SK-N-SH (cell line): ENCODE measurements at regions of chr11 and their contacts with region 1.

Region 1: DNA sequence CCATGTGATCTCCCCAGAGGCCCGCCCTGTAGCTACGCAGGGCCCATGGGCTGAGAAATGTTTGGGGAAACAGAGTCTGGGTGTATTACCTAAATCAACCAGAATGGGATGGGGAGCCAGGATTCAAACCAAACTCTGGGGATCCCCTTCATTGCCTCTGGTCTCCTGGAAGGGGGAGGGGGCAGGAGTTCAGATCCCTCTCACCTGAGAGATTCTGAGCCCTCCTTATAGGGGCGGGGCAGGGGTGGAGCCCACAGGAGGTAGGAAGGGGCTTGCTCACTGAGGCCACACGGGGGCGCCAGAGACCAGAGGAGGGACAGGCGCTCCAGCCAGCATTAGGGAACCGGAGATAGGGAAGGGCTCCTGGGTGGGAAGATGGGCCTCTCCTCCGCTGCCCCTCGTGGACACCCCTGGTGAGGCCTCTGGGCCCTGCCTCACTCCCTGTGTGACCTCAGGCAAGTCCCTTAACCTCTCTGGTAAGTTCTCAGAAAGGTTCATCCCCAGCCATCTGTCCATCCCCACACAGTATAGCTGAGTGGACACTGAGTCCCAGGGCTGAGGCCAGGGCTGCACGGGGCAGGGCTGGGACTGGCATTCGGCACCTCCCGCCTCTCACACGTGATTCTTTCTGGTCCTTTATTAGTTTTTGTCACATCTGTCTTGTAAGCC is 2.7 kb upstream of the CDC42BPG start:
- DNase-seq: peak; percentile 97
- H3K4me3 ChIP-seq: peak overlapping the region in 1 of 2 experiments; percentile 39; a peak in 1 of 4 replicates
- H3K27ac ChIP-seq: no peak overlapping the region
- H3K4me1 ChIP-seq: peaks cover 5 to 7% of the 10 kb centered on the region in 2 experiments; a peak in 2 of 4 replicates
- H3K27me3 ChIP-seq: no peaks in the 10 kb centered on the region
- CTCF ChIP-seq: peak; percentile 96
- EP300 ChIP-seq: no peak
- RAD21 ChIP-seq: peak; percentile 95

Region 2: DNA sequence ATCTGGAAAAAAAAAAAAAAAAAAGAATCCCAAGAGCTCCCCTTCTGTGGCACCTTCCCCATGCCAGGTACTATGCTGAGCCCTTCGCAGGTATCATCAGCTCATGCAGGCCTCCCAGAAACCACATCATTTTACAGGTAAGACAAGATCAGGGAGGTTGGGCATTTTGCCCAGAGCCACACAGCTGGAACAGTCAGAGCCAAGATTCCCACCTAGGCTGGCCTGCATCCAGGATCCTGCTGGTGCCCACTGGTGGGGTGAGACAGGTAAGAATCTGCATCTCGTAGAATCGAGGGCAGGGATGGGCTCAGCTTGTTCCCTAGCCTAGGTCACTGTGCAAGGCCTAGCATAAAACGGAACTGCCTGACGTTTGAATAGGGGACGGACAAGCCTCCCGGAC is 21.1 kb before region 1 on chr11:
- CTCF ChIA-PET with region 1: interaction called, 11 read pairs
- POLR2A ChIA-PET with region 1: no interaction called
- DNase-seq: no peak
- H3K4me3 ChIP-seq: no peak overlapping the region
- H3K27ac ChIP-seq: no peak overlapping the region
- H3K4me1 ChIP-seq: no peaks in the 10 kb centered on the region
- H3K27me3 ChIP-seq: no peaks in the 10 kb centered on the region; the same call in 1 of the 2 replicates
- CTCF ChIP-seq: no peak
- EP300 ChIP-seq: no peak
- RAD21 ChIP-seq: no peak

Region 3: DNA sequence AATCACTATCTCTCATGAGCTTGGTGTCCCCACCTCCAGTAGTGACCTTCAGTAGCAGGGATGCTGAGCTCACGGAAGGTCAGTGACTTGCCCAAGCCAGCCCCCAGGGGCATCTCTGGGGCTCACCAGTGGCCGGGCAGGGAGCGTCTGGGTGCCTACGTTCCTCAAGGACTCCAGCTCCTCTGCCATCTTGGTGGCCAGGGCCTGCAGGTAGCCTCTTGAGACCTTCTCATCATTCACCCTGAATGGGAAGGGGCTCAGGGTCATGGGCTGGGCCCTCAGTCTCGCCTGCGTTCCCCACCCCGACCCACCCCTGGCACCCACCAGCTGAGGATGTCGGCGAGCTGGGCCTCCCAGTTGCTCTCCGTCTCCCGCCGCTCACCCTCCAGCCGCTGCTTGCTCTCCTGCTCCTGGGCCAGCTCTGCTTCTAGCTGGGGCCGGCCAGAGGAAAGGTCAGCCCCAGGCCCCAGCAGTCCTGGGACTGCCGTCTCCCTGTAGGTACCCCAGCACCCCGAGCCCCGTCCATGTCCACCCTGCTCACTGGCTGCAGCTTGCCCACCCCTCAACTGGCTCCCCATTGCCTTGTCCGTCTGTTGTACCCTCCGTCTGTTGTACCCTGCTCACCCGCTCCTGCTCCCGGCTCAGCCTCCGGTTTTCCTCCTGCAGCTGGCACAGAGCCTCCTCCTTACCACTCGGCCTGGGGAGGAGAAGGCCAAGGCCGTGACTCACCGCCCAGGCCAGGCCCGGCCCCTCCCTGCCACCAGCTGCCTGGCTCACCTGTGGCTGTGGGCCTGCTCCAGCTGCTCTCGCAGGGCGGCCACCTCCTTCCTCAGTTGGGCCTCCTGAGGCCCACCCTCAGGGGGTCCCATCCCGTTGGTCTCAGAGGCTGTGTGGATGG is 12.2 kb before region 1 on chr11:
- CTCF ChIA-PET with region 1: interaction called, 21 read pairs
- POLR2A ChIA-PET with region 1: no interaction called
- DNase-seq: no peak
- H3K4me3 ChIP-seq: no peak overlapping the region
- H3K27ac ChIP-seq: no peak overlapping the region
- H3K4me1 ChIP-seq: peaks cover 0 to 5% of the 10 kb centered on the region in 2 experiments; a peak in 1 of 4 replicates
- H3K27me3 ChIP-seq: no peaks in the 10 kb centered on the region
- CTCF ChIP-seq: no peak
- EP300 ChIP-seq: no peak
- RAD21 ChIP-seq: no peak

Region 4: GRCh38 chr11:64864473-64865285 is 17.5 kb after region 1 on chr11:
- CTCF ChIA-PET with region 1: interaction called, 40 read pairs
- POLR2A ChIA-PET with region 1: no interaction called
- DNase-seq: no peak
- H3K4me3 ChIP-seq: no peak overlapping the region
- H3K27ac ChIP-seq: peak overlapping the region in 1 of 2 experiments; percentile 12; a peak in 1 of 4 replicates
- H3K4me1 ChIP-seq: peaks cover 6 to 11% of the 10 kb centered on the region in 2 experiments; a peak in 3 of 4 replicates
- H3K27me3 ChIP-seq: no peaks in the 10 kb centered on the region
- CTCF ChIP-seq: no peak
- EP300 ChIP-seq: no peak
- RAD21 ChIP-seq: no peak

Region 5: GRCh38 chr11:64878494-64879243 is 31.5 kb after region 1 on chr11 and contains the start of gene EHD1:
- CTCF ChIA-PET with region 1: interaction called, 530 read pairs
- POLR2A ChIA-PET with region 1: no interaction called
- DNase-seq: peak; percentile 100
- H3K4me3 ChIP-seq: peak within 1 kb of the TSS; percentile 95 to 96
- H3K27ac ChIP-seq: peak within 1 kb of the TSS; percentile 76 to 77
- H3K4me1 ChIP-seq: peaks cover 6 to 32% of the 10 kb centered on the region in 2 experiments; a peak in 2 of 4 replicates
- H3K27me3 ChIP-seq: no peaks in the 10 kb centered on the region
- CTCF ChIP-seq: peak; percentile 49
- EP300 ChIP-seq: no peak
- RAD21 ChIP-seq: peak; percentile 42; the same call in 1 of the 2 replicates
- polyA plus RNA-seq, gene EHD1: 57.6 and 93.3 TPM in 2 replicates

Region 6: DNA sequence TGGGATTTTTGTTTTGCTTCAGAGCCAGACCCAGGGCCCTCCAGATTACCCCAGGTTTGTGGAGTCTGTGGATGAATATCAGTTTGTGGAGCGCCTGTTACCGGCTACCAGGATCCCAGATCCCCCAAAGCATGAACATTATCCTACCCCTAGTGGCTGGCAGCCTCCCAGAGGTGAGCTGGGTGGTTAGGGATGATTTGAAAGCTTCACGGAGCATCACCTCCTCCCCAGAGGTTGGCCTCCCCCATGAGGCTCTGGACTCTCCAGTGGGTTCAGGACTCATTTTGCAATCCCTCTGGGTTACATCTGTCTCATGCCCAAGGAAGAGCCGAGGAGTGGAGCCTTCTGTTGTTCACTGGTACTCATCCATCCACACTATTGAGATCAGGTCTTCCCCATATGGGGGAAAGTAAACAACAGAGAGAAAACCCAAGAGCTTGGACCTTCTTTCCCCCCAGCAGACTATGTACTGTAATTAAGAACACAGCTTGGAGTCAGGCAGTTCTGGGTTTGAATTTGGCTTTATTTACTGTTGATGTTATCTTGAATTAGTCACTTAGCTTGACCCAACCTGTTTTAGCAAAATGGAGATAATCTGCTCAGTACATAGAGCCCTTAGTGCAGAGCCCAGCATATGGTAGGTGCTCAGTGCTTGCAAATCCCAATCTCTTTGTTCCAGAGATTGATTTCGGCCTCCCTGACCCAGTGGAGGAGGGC is 277.5 kb after region 1 on chr11:
- CTCF ChIA-PET with region 1: no interaction called
- POLR2A ChIA-PET with region 1: no interaction called
- DNase-seq: no peak
- H3K4me3 ChIP-seq: no peak overlapping the region
- H3K27ac ChIP-seq: no peak overlapping the region
- H3K4me1 ChIP-seq: peaks cover 8 to 13% of the 10 kb centered on the region in 2 experiments; a peak in 3 of 4 replicates
- H3K27me3 ChIP-seq: no peaks in the 10 kb centered on the region
- CTCF ChIP-seq: no peak
- EP300 ChIP-seq: no peak
- RAD21 ChIP-seq: no peak